ENCODE measurements at regions of chr20 and their contacts with region 1.

Region 1: DNA sequence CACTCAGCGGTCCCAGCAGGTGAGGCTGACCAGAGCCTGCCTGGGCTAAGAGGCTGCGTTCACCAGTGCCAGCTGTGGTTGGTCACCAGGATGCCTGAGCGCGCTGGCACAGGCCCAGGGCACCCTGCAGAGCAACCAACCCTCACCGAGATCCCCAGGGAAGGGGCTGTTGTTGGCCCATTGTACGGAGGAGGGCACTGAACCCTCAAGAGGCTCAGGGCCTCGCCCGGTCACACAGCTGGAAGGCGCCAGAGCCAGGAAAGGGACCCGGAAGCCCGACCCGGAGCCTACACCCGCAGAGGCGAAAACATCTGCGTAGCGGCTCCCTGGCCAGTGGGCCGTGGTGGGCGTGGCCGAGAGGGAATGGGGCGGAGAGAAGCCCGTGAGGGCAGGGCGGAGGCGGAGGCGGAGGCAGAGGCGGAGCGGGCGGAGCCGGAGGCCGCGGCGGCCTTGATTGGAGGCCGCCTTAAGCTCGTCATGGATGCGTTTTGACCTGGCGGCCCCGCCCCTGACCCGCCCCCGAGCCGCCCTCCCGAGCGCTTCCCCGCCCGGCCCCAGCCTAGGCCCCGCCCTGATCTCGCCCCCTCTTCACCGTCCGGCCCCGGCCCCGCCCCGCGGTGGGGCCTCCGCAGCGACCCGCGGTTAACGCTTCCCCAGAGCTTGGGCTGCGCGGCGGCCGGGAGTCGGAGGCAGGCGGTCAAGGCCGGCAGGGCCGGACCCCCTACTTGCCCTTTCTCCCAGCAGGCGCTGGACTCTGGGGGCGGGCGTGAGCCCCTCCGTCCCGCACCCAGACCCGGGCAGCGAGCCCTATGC is 2.2 kb upstream of the MRGBP start:
- DNase-seq: peak; percentile 90 to 96 (median 95)
- H3K4me3 ChIP-seq: peak overlapping the region; percentile 89
- H3K4me3 Mint-ChIP-seq: peak overlapping the region; percentile 78 to 96 (median 86)
- H3K27ac ChIP-seq: peak overlapping the region; percentile 94
- H3K27ac Mint-ChIP-seq: peak overlapping the region; percentile 93 to 99 (median 96)
- H3K4me1 ChIP-seq: peaks cover 22% of the 10 kb centered on the region
- H3K4me1 Mint-ChIP-seq: peaks cover 25 to 57% (median 33%) of the 10 kb centered on the region in 3 donors
- H3K27me3 ChIP-seq: no peaks in the 10 kb centered on the region
- H3K27me3 Mint-ChIP-seq: no peaks in the 10 kb centered on the region

Region 2: DNA sequence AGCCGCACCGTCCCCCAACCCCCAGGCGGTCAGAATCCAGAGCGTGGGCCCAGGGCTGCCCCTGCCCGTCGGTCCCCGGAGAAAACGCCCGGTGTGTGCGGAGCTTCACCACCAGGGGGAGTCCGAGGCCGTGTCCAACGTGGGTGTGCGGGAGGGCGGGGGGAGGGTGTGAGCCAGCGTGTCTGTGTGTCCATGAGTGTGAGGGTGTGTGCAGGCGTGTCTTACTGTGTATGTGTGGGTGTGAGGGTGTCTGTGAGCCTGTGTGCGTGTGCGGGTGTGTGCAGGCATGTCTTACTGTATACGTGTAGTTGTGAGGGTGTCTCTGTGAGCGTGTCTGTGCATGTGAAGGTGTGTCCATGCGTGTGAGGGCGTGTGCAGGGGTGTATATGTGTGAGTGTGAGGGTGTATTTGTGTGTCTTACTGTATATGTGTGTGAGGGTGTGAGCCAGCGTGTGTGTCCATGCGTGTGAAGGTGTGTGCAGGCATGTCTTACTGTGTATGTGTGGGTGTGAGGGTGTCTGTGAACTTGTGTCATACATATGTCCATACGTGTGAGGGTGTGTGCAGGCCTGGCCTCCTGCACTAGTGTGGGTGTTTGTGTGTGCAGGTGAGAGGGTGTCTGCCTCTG is 293.8 kb before region 1 on chr20:
- CTCF ChIA-PET with region 1: interaction called, 13 read pairs
- POLR2A ChIA-PET with region 1: interaction called, 3 read pairs
- DNase-seq: peak; percentile 58 to 81 (median 69)
- H3K4me3 ChIP-seq: no peak overlapping the region
- H3K4me3 Mint-ChIP-seq: peak overlapping the region in 1 of 7 donors; percentile 28
- H3K27ac ChIP-seq: no peak overlapping the region
- H3K27ac Mint-ChIP-seq: peak overlapping the region in 5 of 8 donors; percentile 1 to 79 (median 63)
- H3K4me1 ChIP-seq: no peaks in the 10 kb centered on the region
- H3K4me1 Mint-ChIP-seq: peaks cover 13 to 23% (median 20%) of the 10 kb centered on the region in 3 donors
- H3K27me3 ChIP-seq: no peaks in the 10 kb centered on the region
- H3K27me3 Mint-ChIP-seq: peaks cover 3% of the 10 kb centered on the region in 2 donors

Region 3: DNA sequence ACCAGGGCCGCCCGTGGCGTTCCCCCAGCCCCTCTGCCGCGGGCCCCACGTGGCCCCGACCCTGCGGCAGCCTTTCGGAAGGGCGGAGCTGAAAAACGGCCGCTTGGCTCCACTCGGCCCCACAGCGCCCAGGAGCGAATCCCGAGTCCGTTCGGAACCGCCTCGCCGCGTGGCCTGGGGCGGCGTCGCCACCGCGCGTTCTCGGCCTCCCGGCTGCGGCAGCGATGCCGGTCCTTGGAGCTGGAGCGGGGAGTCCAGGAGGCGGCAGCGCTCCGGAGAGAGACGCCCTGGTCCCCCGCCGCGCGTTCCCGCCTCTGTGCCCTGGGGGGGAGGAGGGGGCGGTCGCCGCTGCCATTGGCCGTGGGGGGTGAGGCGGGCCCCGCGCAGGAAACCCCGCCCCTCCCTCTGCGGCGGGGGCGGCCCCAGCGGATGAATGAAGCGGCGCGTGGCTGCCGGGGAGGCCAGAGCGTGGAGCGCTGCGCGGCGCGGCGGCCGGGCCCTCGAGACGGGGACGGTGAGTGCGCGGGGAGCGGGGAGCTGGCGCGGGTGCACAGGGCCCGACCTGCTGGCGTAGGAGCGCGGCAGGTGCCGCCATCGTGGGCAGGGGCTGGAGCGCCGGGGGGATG is 152.0 kb before region 1 on chr20 and contains the start of gene SLCO4A1:
- CTCF ChIA-PET with region 1: interaction called, 10 read pairs
- POLR2A ChIA-PET with region 1: interaction called, 12 read pairs
- DNase-seq: peak; percentile 74 to 85 (median 79)
- H3K4me3 ChIP-seq: peak within 1 kb of the TSS; percentile 61
- H3K4me3 Mint-ChIP-seq: peak within 1 kb of the TSS; percentile 70 to 90 (median 73)
- H3K27ac ChIP-seq: peak within 1 kb of the TSS; percentile 9
- H3K27ac Mint-ChIP-seq: peak within 1 kb of the TSS in 2 of 8 donors; percentile 55 to 94
- H3K4me1 ChIP-seq: peaks cover 17% of the 10 kb centered on the region
- H3K4me1 Mint-ChIP-seq: peaks cover 4 to 18% (median 8%) of the 10 kb centered on the region in 3 donors
- H3K27me3 ChIP-seq: no peaks in the 10 kb centered on the region
- H3K27me3 Mint-ChIP-seq: no peaks in the 10 kb centered on the region
- total RNA-seq, gene SLCO4A1: 42.0 to 44.9 TPM

Region 4: DNA sequence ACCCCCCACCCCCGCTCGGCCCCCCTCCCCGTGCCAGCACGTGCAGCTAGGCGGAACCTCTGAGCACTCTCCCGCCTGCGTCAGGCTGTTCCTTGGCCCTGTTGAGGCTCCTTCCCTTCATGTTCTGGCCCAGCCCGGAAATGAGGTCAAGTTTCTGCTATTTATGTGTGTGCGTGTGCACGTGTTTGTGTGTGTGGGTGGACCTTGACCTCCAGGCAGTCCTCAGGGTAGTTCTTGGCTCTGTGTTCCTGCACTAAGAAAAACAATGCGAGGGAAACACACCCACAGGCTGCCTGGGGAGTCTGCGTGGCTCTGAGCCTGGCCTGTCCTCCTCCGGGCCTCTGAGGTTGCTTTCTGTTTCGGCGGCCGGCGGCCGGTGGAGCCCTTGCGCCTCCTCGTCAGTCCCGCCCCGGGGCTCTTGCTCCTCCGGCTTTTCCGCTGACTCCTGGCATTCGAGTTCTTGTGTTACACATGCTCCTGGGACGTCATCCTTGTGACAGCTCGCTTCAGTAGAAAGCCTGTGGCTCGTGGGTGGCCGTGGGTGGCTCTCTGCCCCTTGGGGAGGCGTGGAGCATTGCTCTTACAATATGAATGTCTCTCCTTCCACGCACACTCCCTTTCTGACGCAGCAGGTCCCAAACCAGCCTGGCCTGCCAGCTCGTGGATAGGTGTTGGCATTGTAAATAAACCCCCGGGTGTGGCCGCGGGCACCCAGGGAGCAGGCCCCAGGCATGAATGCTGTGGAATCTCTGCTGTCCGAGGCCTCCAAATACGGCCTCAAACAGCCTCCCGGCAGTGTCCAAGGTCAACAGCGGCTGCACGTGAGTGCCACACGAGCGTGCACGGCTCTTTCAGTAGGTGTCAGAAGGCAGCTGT is 141.8 kb before region 1 on chr20:
- CTCF ChIA-PET with region 1: interaction called, 10 read pairs
- POLR2A ChIA-PET with region 1: interaction called, 28 read pairs
- DNase-seq: peak; percentile 34 to 83 (median 73)
- H3K4me3 ChIP-seq: peak overlapping the region; percentile 47
- H3K4me3 Mint-ChIP-seq: peak overlapping the region; percentile 72 to 90 (median 82)
- H3K27ac ChIP-seq: peak overlapping the region; percentile 82
- H3K27ac Mint-ChIP-seq: peak overlapping the region; percentile 90 to 99 (median 96)
- H3K4me1 ChIP-seq: peaks cover 29% of the 10 kb centered on the region
- H3K4me1 Mint-ChIP-seq: peaks cover 20 to 32% (median 30%) of the 10 kb centered on the region in 3 donors
- H3K27me3 ChIP-seq: no peaks in the 10 kb centered on the region
- H3K27me3 Mint-ChIP-seq: peaks cover 0 to 2% of the 10 kb centered on the region in 2 donors

Region 5: GRCh38 chr20:62740286-62741141 is 53.6 kb before region 1 on chr20:
- CTCF ChIA-PET with region 1: interaction called, 17 read pairs
- POLR2A ChIA-PET with region 1: interaction called, 48 read pairs
- DNase-seq: peak; percentile 68 to 91 (median 70)
- H3K4me3 ChIP-seq: peak overlapping the region; percentile 76
- H3K4me3 Mint-ChIP-seq: peak overlapping the region; percentile 78 to 93 (median 82)
- H3K27ac ChIP-seq: peak overlapping the region; percentile 81
- H3K27ac Mint-ChIP-seq: peak overlapping the region; percentile 68 to 99 (median 92)
- H3K4me1 ChIP-seq: peaks cover 55% of the 10 kb centered on the region
- H3K4me1 Mint-ChIP-seq: peaks cover 40 to 53% (median 43%) of the 10 kb centered on the region in 3 donors
- H3K27me3 ChIP-seq: no peaks in the 10 kb centered on the region
- H3K27me3 Mint-ChIP-seq: no peaks in the 10 kb centered on the region

Region 6: GRCh38 chr20:62861726-62862336 is 67.7 kb after region 1 on chr20 and contains the start of gene TCFL5:
- CTCF ChIA-PET with region 1: no interaction called
- POLR2A ChIA-PET with region 1: interaction called, 16 read pairs
- DNase-seq: peak; percentile 88 to 94 (median 90)
- H3K4me3 ChIP-seq: no peak within 1 kb of the TSS
- H3K4me3 Mint-ChIP-seq: peak within 1 kb of the TSS; percentile 58 to 88 (median 74)
- H3K27ac ChIP-seq: peak within 1 kb of the TSS; percentile 24
- H3K27ac Mint-ChIP-seq: peak within 1 kb of the TSS; percentile 53 to 92 (median 86)
- H3K4me1 ChIP-seq: peaks cover 8% of the 10 kb centered on the region
- H3K4me1 Mint-ChIP-seq: peaks cover 12 to 21% (median 19%) of the 10 kb centered on the region in 3 donors
- H3K27me3 ChIP-seq: no peaks in the 10 kb centered on the region
- H3K27me3 Mint-ChIP-seq: peaks cover 0 to 2% of the 10 kb centered on the region in 2 donors
- total RNA-seq, gene TCFL5: 4.6 to 6.2 TPM

Measured in CD8-positive, alpha-beta memory T cell (primary cell).